Naive thymus-derived CD4-positive, alpha-beta T cell (primary cell): ENCODE measurements at regions of chr11 and their contacts with region 1.

Region 1: DNA sequence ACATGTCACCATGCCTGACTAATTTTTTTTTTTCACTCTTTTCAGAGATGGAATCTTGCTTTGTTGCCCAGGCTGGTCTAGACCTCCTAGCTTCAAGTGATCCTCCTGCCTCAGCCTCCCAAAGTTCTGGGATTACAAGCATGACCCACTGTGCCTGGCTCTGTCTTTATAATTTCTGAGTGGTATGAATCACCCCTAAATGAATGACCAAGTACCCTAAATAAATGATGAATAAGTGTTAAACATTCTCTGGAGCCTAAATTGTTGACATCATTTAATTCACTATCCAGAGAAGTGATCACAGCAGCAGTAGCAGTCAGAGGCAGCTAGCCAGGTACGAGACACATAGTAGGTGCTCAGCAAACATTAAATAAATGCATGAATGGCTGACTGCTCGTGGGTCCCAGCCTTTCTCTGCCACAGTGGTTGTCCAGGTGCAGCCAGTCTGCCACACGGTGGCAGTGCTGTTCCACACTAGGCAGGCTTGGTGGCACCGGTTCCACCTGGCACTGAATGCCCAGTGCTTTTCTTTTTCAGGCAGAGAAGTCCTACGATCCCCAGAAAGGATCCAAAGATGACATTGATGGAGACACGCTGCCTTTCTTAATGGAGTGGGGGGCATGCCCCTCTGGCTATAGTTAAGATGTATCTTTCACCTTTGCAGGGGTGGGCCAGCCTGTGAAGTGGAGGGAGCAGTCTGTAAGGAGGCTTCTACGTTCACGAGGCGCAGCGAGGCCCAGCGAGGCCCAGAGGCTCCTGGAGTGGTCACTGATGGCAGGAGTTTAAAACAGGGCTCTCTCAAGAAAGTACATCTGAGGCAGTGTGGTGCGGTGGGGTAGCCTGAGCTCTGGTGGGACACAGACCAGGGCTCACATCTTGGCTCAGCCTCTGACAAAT is 8.7 kb upstream of the TTC12 start:
- DNase-seq: peak; percentile 32 to 68 (median 61)
- ATAC-seq: peak; percentile 95
- H3K4me3 ChIP-seq: no peak overlapping the region
- H3K4me3 Mint-ChIP-seq: no peak overlapping the region
- H3K27ac ChIP-seq: no peak overlapping the region
- H3K27ac Mint-ChIP-seq: no peak overlapping the region
- H3K4me1 ChIP-seq: no peaks in the 10 kb centered on the region
- H3K4me1 Mint-ChIP-seq: peaks cover 0 to 8% (median 3%) of the 10 kb centered on the region in 7 donors
- H3K27me3 ChIP-seq: no peaks in the 10 kb centered on the region
- H3K27me3 Mint-ChIP-seq: peaks cover 0 to 25% (median 11%) of the 10 kb centered on the region in 5 donors

Region 2: GRCh38 chr11:113532697-113533424 is 227.2 kb after region 1 on chr11:
- CTCF ChIA-PET with region 1: interaction called, 8 read pairs
- POLR2A ChIA-PET with region 1: no interaction called
- intact Hi-C with region 1: loop called in 1 of 2 experiments (anchors 1 kb)
- DNase-seq: peak in 8 of 9 donors; percentile 18 to 56 (median 34)
- ATAC-seq: peak; percentile 72
- H3K4me3 ChIP-seq: no peak overlapping the region
- H3K4me3 Mint-ChIP-seq: no peak overlapping the region
- H3K27ac ChIP-seq: no peak overlapping the region
- H3K27ac Mint-ChIP-seq: no peak overlapping the region
- H3K4me1 ChIP-seq: no peaks in the 10 kb centered on the region
- H3K4me1 Mint-ChIP-seq: no peaks in the 10 kb centered on the region
- H3K27me3 ChIP-seq: no peaks in the 10 kb centered on the region
- H3K27me3 Mint-ChIP-seq: peaks cover 18 to 42% (median 29%) of the 10 kb centered on the region in 5 donors

Region 3: GRCh38 chr11:113730887-113731726 is 425.4 kb after region 1 on chr11:
- CTCF ChIA-PET with region 1: no interaction called
- POLR2A ChIA-PET with region 1: no interaction called
- intact Hi-C with region 1: loop called (anchors 1 kb)
- DNase-seq: no peak
- ATAC-seq: no peak
- H3K4me3 ChIP-seq: no peak overlapping the region
- H3K4me3 Mint-ChIP-seq: no peak overlapping the region
- H3K27ac ChIP-seq: no peak overlapping the region
- H3K27ac Mint-ChIP-seq: no peak overlapping the region
- H3K4me1 ChIP-seq: no peaks in the 10 kb centered on the region
- H3K4me1 Mint-ChIP-seq: peaks cover 0 to 3% (median 0%) of the 10 kb centered on the region in 7 donors
- H3K27me3 ChIP-seq: no peaks in the 10 kb centered on the region
- H3K27me3 Mint-ChIP-seq: no peaks in the 10 kb centered on the region

Region 4: GRCh38 chr11:113796663-113797259 is 491.1 kb after region 1 on chr11:
- CTCF ChIA-PET with region 1: interaction called, 8 read pairs
- POLR2A ChIA-PET with region 1: no interaction called
- intact Hi-C with region 1: loop called (anchors 1 kb)
- DNase-seq: peak in 4 of 9 donors; percentile 7 to 24 (median 14)
- ATAC-seq: peak; percentile 75
- H3K4me3 ChIP-seq: no peak overlapping the region
- H3K4me3 Mint-ChIP-seq: no peak overlapping the region
- H3K27ac ChIP-seq: no peak overlapping the region
- H3K27ac Mint-ChIP-seq: no peak overlapping the region
- H3K4me1 ChIP-seq: no peaks in the 10 kb centered on the region
- H3K4me1 Mint-ChIP-seq: no peaks in the 10 kb centered on the region
- H3K27me3 ChIP-seq: no peaks in the 10 kb centered on the region
- H3K27me3 Mint-ChIP-seq: no peaks in the 10 kb centered on the region

Region 5: DNA sequence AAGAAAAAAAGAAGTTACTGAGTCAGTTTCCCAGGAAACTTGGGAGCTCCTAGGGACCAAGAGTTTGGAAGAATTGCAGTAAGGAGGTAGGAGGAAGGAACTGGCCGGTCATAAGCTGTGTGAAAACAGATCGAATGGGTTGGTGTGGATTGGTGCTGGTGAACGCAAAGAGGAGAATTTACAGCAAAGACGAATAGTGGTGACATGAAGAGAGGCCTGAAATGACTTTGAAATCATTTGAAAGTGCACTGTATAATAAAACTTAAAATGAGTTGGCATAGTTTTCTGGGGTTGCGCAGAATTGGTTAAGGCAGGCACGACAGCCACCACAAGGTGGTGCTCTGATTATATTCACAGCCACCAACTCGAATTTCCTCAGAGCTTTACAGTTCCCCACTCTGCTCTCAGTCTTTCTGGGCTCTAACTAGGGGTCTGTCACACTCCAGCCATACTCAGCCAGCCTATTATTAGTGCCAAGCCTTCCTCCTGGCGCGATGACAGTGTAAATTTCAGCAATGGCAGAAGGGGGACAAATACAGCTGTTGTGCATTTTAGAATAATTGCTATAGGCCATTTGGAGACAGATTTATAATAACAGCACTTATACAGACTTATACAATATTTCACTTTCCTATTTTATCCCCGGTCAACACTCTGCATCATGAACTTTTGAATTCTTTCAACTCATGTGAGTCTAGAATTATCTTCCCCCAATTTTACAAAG is 590.6 kb after region 1 on chr11:
- CTCF ChIA-PET with region 1: no interaction called
- POLR2A ChIA-PET with region 1: no interaction called
- intact Hi-C with region 1: loop called in 1 of 2 experiments (anchors 1 kb)
- DNase-seq: peak in 5 of 9 donors; percentile 24 to 42 (median 37)
- ATAC-seq: peak; percentile 80
- H3K4me3 ChIP-seq: no peak overlapping the region
- H3K4me3 Mint-ChIP-seq: no peak overlapping the region
- H3K27ac ChIP-seq: no peak overlapping the region
- H3K27ac Mint-ChIP-seq: no peak overlapping the region
- H3K4me1 ChIP-seq: no peaks in the 10 kb centered on the region
- H3K4me1 Mint-ChIP-seq: peaks cover 0 to 4% (median 0%) of the 10 kb centered on the region in 7 donors
- H3K27me3 ChIP-seq: no peaks in the 10 kb centered on the region
- H3K27me3 Mint-ChIP-seq: peaks cover 0 to 9% (median 0%) of the 10 kb centered on the region in 5 donors

Region 6: DNA sequence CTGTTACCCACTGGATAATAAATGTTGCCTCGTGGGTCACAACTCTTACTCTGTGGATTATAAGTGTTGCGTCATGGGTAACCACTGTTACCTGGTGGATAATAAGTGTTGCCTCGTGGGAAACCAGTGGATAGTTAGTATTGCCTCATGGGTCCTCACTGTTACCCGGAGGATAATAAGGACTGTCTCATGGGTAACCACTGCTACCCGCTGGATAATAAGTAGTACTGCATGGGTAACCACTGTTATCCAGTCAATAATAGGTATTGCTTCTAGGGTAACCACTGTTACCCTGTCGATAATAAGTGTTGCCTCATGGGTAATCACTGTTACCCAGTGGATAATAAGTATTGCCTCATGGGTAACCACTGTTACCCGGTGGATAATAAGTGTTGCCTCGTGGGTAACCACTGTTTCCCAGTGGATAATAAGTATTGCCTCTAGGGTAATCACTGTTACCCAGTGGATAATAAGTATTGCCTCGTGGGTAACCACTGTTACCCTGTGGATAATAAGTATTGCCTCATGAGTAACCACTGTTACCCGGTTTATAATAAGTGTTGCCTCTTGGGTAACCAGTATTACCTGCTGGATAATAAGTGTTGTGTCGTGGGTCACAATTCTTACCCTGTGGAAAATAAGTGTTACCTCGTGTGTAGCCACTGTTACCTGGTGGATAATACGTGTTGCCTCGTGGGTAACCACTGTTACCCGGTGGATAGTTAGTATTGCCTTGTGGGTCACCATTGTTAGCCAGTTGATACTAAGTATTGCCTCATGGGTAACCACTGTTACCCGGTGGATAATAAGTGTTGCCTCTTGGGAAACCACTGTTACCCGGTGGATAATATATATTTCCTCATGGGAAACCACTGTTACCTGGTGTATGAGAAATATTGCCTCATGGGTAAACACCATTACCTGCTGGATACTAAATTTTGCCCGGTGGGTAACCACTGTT is 1305.6 kb after region 1 on chr11:
- CTCF ChIA-PET with region 1: no interaction called
- POLR2A ChIA-PET with region 1: no interaction called
- intact Hi-C with region 1: no loop called
- DNase-seq: no peak
- ATAC-seq: no peak
- H3K4me3 ChIP-seq: no peak overlapping the region
- H3K4me3 Mint-ChIP-seq: no peak overlapping the region
- H3K27ac ChIP-seq: no peak overlapping the region
- H3K27ac Mint-ChIP-seq: no peak overlapping the region
- H3K4me1 ChIP-seq: no peaks in the 10 kb centered on the region
- H3K4me1 Mint-ChIP-seq: no peaks in the 10 kb centered on the region
- H3K27me3 ChIP-seq: no peaks in the 10 kb centered on the region
- H3K27me3 Mint-ChIP-seq: no peaks in the 10 kb centered on the region